ENCODE measurements at regions of chr22 and their contacts with region 1.

Region 1: GRCh38 chr22:20858615-20859416 is at the starts of genes PI4KA and SNAP29:
- DNase-seq: peak; percentile 99
- ATAC-seq: peak; percentile 97 to 98 (median 97)
- H3K4me3 ChIP-seq: peak within 1 kb of the TSS; percentile 72 to 98 (median 87)
- H3K27ac ChIP-seq: peak within 1 kb of the TSS; percentile 74 to 97 (median 92)
- H3K4me1 ChIP-seq: peaks cover 13 to 57% (median 30%) of the 10 kb centered on the region in 9 donors
- H3K27me3 ChIP-seq: no peaks in the 10 kb centered on the region
- CTCF ChIP-seq: no peak
- total RNA-seq, gene PI4KA: 34.8 to 55.2 (median 40.8) TPM
- total RNA-seq, gene SNAP29: 20.6 to 43.6 (median 26.8) TPM

Region 2: DNA sequence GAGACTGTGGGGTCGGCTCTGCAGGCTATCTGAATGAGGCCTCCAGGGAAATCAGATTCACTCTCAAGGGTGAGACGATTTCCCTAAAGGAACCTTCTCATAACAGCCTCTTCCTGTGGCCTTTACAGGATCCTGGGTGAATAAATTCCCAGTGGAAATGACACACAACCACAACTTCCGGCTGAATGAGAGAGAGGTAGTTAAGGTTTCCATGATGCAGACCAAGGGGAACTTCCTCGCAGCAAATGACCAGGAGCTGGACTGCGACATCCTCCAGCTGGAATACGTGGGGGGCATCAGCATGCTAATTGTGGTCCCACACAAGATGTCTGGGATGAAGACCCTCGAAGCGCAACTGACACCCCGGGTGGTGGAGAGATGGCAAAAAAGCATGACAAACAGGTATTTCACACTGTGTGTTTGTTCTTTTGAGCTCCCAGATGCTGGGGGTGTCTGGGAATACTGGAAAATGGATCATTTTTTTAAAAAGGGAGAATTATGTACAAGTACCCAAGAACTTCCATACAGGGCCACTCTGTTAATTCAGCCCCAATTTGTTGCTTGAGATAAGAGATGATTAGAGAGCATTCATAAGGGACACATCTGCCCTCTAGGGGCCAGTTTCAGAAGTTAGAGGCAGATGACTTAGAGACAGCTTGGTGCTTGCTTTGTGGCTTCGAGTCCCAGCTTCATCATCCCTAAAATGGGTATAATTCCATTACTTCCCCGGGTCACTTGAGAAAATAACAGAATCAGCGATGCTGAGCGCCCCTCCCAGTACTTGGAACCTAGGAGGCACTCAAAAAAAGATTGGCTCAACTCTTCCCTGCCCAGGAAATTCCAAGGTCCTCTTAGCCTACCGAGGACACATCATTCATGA is 74.7 kb before region 1 on chr22:
- intact Hi-C with region 1: loop called in 1 of 10 experiments (anchors 10 kb)
- DNase-seq: peak in 1 of 2 donors; percentile 23
- ATAC-seq: peak in 1 of 8 donors; percentile 23
- H3K4me3 ChIP-seq: no peak overlapping the region
- H3K27ac ChIP-seq: no peak overlapping the region
- H3K4me1 ChIP-seq: peaks cover 0 to 33% (median 12%) of the 10 kb centered on the region in 9 donors
- H3K27me3 ChIP-seq: no peaks in the 10 kb centered on the region
- CTCF ChIP-seq: peak; percentile 44 to 73 (median 63)

Region 3: GRCh38 chr22:20825624-20826023 is 33.2 kb before region 1 on chr22:
- intact Hi-C with region 1: loop called in 1 of 10 experiments (anchors 2 kb)
- DNase-seq: no peak
- ATAC-seq: no peak
- H3K4me3 ChIP-seq: no peak overlapping the region
- H3K27ac ChIP-seq: no peak overlapping the region
- H3K4me1 ChIP-seq: no peaks in the 10 kb centered on the region
- H3K27me3 ChIP-seq: no peaks in the 10 kb centered on the region
- CTCF ChIP-seq: no peak

Measured in heart right ventricle (tissue), 16 donors.